Ovary (tissue), 10 donors: ENCODE measurements at regions of chr6 and their contacts with region 1.

Region 1: DNA sequence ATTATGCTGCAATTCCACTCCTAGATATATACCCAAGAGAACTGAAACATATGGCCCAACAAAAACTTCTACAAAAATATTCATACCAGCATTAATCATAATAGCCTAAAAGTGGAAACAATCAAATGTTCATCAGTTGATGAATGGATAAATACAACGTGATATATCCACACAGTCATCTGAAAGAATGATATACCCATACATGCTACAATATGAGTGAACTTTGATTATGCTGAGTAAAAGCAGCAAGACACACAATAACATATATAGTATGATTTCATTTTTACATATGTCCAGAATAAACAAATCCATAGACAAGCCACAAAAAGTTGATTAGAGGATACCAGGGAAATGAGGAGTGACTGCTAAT is 30.7 kb downstream of the CDK19 start:
- DNase-seq: no peak
- H3K4me3 ChIP-seq: no peak overlapping the region
- H3K27ac ChIP-seq: no peak overlapping the region
- H3K4me1 ChIP-seq: peaks cover 1% of the 10 kb centered on the region
- H3K27me3 ChIP-seq: no peaks in the 10 kb centered on the region
- CTCF ChIP-seq: no peak
- EP300 ChIP-seq: no peak
- POLR2A ChIP-seq: no peak

Region 2: GRCh38 chr6:110439356-110439755 is 345.2 kb before region 1 on chr6:
- intact Hi-C with region 1: loop called in 1 of 4 experiments (anchors 5 kb)
- DNase-seq: no peak
- H3K4me3 ChIP-seq: no peak overlapping the region
- H3K27ac ChIP-seq: no peak overlapping the region
- H3K4me1 ChIP-seq: no peaks in the 10 kb centered on the region
- H3K27me3 ChIP-seq: no peaks in the 10 kb centered on the region
- CTCF ChIP-seq: no peak
- EP300 ChIP-seq: no peak
- POLR2A ChIP-seq: no peak